ENCODE measurements at regions of chr11 and their contacts with region 1.

Region 1: DNA sequence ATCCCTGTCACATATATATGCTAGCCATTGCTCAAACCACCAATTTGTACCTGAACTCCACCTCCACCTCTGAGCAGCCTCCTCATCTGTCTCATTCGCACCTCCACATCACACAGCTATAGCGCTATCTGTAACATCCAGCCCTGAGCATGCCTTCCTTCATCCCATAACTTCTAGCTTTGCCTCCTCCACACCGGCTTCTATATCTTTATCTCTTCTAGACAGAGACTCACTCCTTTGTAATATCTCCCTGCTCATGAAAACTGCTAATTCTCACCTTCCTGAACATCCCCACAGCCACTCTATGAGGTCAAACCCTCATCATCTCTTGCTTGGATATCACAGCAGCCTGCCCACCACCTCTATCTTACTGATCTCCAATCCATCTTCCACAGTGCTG is 5.9 kb downstream of the SIAE start:
- DNase-seq: no peak

Region 2: GRCh38 chr11:124644426-124645280 is 22.9 kb before region 1 on chr11:
- intact Hi-C with region 1: loop called in 1 of 2 experiments (anchors 2 kb)
- DNase-seq: peak; percentile 83

Region 3: DNA sequence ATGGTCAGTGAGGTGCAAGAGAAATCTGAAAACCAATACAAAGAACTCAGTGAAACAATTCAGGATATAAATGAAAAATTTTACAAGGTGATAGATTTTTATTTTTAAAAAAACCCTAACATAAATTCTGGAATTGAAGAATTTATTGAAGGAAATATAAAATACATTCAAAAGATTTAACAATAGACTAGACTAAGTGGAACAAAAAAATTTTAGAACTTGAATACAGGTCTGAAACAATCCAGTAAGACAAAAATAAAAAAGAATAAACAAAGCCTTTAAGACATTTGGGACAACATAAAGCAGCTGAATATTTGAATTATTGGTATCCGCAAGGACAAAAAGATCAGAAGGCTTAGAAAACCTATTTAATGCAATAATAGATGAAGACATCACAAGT is 14.8 kb after region 1 on chr11:
- intact Hi-C with region 1: no loop called
- DNase-seq: no peak